Panc1 (cell line): ENCODE measurements at regions of chr12 and their contacts with region 1.

Region 1: DNA sequence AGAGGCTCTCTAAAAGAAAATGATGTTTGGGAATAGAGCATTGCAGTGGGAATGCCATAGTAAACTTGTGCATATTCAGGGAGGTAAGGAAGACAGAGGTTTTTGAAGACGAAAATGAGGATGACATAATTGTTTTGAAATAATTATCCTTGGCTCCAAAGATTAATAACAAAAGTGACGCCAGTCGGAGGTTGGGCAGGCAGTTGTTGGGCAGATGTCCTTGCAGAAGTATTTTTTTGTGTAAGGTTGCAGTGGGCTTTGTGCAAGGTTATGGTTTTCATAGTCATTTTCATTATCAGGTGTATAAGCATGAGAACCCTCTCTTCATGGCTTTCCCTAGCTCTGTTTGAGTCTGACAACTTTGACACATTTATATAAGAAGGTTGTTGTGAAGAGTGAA is 35.3 kb downstream of the METAP2 start:
- DNase-seq: no peak
- ATAC-seq: no peak
- H3K4me3 ChIP-seq: no peak overlapping the region
- H3K27ac ChIP-seq: no peak overlapping the region
- H3K4me1 ChIP-seq: no peaks in the 10 kb centered on the region
- H3K27me3 ChIP-seq: no peaks in the 10 kb centered on the region
- CTCF ChIP-seq: no peak

Region 2: GRCh38 chr12:95838125-95838524 is 328.8 kb after region 1 on chr12:
- CTCF ChIA-PET with region 1: interaction called, 11 read pairs
- POLR2A ChIA-PET with region 1: no interaction called
- in situ Hi-C with region 1: no loop called
- intact Hi-C with region 1: no loop called
- DNase-seq: no peak
- ATAC-seq: 0 out of 2 replicates have a peak, but pooled peaks have one; percentile 33
- H3K4me3 ChIP-seq: peak overlapping the region in 1 of 2 experiments; percentile 52; a peak in 2 of 4 replicates
- H3K27ac ChIP-seq: no peak overlapping the region
- H3K4me1 ChIP-seq: peaks cover 13% of the 10 kb centered on the region
- H3K27me3 ChIP-seq: peaks cover 6% of the 10 kb centered on the region
- CTCF ChIP-seq: no peak

Region 3: DNA sequence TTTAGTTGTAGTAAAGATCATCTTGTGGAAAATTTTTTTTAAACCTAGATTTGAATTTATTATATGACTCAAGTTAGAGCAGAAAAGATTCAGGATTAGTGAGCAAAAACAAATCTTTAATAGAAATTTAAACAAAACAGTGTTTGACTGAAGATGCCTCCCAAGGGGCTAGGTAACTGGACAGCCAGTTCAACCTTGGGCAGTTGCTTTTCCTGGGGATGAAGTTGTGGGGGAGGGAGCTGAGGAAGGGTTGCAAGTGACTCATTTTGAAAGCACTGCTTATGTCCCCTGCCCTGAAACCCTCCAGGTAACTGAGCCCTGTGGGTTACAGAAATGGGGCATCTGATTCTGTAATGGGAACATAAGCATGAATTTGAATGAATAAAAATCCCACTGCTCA is 993.2 kb after region 1 on chr12:
- CTCF ChIA-PET with region 1: no interaction called
- POLR2A ChIA-PET with region 1: interaction called, 12 read pairs
- in situ Hi-C with region 1: no loop called
- intact Hi-C with region 1: no loop called
- DNase-seq: no peak
- ATAC-seq: peak; percentile 45; the same call in 1 of the 2 replicates
- H3K4me3 ChIP-seq: no peak overlapping the region
- H3K27ac ChIP-seq: no peak overlapping the region
- H3K4me1 ChIP-seq: 0 out of 2 replicates have a peak, but pooled peaks cover 3% of the 10 kb centered on the region
- H3K27me3 ChIP-seq: no peaks in the 10 kb centered on the region
- CTCF ChIP-seq: no peak